ENCODE measurements at regions of chr10 and their contacts with region 1.

Region 1: GRCh38 chr10:76411729-76412435 is 980.5 kb downstream of the LRMDA start:
- DNase-seq: no peak
- H3K4me3 ChIP-seq: no peak overlapping the region
- H3K27ac ChIP-seq: no peak overlapping the region
- H3K4me1 ChIP-seq: no peaks in the 10 kb centered on the region
- H3K27me3 ChIP-seq: peaks cover 1% of the 10 kb centered on the region
- CTCF ChIP-seq: no peak

Region 2: GRCh38 chr10:76469675-76470074 is 57.8 kb after region 1 on chr10:
- CTCF ChIA-PET with region 1: no interaction called
- dilution Hi-C with region 1: loop called (anchors 5 kb)
- in situ Hi-C with region 1: no loop called
- intact Hi-C with region 1: no loop called
- DNase-seq: no peak
- H3K4me3 ChIP-seq: no peak overlapping the region
- H3K27ac ChIP-seq: no peak overlapping the region
- H3K4me1 ChIP-seq: no peaks in the 10 kb centered on the region
- H3K27me3 ChIP-seq: no peaks in the 10 kb centered on the region
- CTCF ChIP-seq: no peak